Right ventricle myocardium inferior (tissue), 1 donor: ENCODE measurements at regions of chr3 and their contacts with region 1.

Region 1: GRCh38 chr3:138834359-138835212 is at the start of gene PIK3CB:
- DNase-seq: peak; percentile 96
- ATAC-seq: peak; percentile 99
- total RNA-seq, gene PIK3CB: 30.9 TPM

Region 2: DNA sequence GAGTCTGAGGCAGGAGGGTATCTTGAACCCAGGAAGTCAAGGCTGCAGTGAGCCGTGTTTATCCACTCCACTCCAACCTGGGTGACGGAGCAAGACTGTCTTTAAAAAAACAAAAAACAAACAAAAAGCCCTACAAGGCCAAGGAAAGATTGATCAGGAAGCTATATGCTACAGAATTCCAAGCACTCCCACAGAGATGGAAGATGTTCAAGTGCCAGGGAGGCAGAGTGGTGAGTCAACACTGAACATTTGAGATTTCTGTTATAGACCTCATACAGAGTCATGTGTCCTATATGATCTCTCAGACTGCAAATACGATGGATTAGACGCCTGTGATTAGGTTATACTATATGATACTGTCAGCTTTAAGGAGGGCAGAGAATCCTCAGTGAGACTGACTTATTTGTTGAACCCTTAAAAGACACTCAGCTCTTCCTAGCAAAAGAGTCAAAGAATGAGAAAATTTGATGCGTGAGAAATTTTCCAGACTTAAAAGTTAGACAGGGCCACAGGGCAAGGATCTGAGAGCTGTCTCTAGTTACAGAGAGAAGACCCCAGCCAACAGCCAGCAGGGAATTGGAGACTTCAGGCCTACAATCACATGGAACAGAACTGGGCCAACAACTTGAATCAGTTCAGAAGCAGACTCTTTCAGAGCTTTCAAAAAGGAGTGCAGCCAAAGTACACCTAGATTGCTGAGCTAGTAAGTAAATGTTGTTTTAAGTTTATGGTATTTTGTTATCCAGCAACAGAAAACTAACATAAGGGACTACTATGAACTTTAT is 107.4 kb before region 1 on chr3:
- intact Hi-C with region 1: loop called (anchors 10 kb)
- DNase-seq: no peak
- ATAC-seq: no peak

Region 3: DNA sequence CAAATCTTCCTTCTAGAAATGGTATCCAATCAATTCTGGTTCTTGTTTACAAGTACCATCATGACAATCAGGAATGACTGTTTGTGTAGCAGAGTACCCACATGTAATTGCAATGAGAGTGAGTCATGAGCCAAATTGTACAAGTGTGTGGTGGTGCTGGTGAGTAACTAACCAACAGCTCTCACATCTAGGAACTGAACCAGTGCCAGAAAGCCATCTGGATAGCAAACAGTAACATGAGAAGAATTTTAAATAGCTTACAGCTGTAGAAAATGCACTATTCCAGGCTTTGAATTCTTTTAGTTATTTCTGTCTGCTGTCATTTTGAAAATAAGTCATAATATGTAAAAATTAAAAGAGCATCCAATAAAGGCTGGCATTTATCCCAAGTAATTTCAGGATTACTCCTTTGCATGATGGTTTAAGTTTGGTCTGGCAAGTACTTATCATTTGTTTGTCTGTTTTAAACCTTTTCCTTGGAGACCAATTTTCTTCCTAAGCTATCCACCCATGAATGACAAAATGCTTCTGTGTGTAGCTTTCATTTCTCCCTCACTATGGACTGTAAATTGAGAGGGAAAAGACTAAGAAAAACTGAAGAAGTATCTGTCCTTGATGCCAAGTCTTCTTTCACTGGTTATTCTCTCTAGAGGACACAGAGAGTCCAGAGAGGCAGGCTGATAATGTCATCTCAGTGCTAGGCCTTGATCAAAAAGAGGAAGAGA is 59.9 kb before region 1 on chr3:
- intact Hi-C with region 1: loop called (anchors 2 kb)
- DNase-seq: no peak
- ATAC-seq: peak; percentile 90

Region 4: DNA sequence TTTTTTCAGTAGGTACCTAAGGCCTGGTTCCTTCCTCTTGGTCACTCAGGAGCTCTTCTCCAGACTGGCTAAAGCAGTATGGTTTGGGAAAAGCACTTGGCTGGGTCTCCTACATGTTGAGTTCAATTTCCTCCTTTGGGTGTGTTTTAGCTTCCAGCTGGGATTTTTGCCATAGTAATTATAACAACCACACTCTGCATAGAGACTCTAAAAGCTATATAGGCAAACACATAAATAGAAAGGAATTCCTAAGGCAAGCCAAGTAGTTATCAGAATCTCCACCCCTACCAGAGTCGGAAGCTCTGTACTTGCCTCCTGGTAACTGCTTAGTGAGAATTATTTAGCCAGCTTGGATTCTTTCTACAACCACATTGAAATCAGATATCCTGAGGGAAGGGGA is 63.7 kb after region 1 on chr3:
- intact Hi-C with region 1: loop called (anchors 5 kb)
- DNase-seq: no peak
- ATAC-seq: peak; percentile 84